ENCODE measurements at regions of chr9 and their contacts with region 1.

Region 1: GRCh38 chr9:134175808-134176598 is 11.6 kb upstream of the RNU6ATAC start:
- DNase-seq: no peak
- ATAC-seq: no peak
- H3K4me3 ChIP-seq: no peak overlapping the region
- H3K4me3 Mint-ChIP-seq: no peak overlapping the region
- H3K27ac ChIP-seq: no peak overlapping the region
- H3K27ac Mint-ChIP-seq: no peak overlapping the region
- H3K4me1 ChIP-seq: peaks cover 21 to 23% of the 10 kb centered on the region in 2 donors
- H3K4me1 Mint-ChIP-seq: peaks cover 20% of the 10 kb centered on the region
- H3K27me3 ChIP-seq: peaks cover 0 to 28% (median 8%) of the 10 kb centered on the region in 4 experiments
- H3K27me3 Mint-ChIP-seq: peaks cover 23% of the 10 kb centered on the region
- CTCF ChIP-seq: no peak

Region 2: DNA sequence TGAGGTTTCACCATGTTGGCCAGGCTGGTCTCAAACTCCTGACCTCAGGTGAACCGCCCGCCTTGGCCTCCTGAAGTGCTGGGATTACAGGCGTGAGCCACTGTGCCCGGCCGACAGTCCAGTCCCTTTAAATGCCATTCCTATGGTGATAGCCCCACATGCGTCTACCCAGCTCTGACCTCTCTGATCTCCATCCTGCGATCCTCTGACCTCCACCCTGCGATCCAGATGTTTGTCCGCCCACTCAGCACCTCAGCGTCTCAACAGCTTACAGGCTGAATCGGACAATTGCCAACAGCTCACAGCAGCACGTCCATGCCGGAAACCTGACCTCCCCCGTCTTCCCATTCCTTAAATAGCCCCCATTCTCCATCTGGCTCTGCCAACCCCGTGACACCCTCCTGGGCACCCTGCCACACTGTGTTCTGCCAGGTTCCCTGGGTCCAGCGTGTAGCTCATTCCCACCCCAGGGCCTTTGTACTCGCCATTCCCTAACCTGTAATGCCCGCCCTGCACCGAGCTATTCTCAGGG is 32.4 kb after region 1 on chr9:
- CTCF ChIA-PET with region 1: no interaction called
- POLR2A ChIA-PET with region 1: no interaction called
- intact Hi-C with region 1: no loop called
- DNase-seq: no peak
- ATAC-seq: no peak
- H3K4me3 ChIP-seq: no peak overlapping the region
- H3K4me3 Mint-ChIP-seq: no peak overlapping the region
- H3K27ac ChIP-seq: no peak overlapping the region
- H3K27ac Mint-ChIP-seq: no peak overlapping the region
- H3K4me1 ChIP-seq: no peaks in the 10 kb centered on the region
- H3K4me1 Mint-ChIP-seq: no peaks in the 10 kb centered on the region
- H3K27me3 ChIP-seq: no peaks in the 10 kb centered on the region
- H3K27me3 Mint-ChIP-seq: peaks cover 11% of the 10 kb centered on the region
- CTCF ChIP-seq: no peak

Region 3: DNA sequence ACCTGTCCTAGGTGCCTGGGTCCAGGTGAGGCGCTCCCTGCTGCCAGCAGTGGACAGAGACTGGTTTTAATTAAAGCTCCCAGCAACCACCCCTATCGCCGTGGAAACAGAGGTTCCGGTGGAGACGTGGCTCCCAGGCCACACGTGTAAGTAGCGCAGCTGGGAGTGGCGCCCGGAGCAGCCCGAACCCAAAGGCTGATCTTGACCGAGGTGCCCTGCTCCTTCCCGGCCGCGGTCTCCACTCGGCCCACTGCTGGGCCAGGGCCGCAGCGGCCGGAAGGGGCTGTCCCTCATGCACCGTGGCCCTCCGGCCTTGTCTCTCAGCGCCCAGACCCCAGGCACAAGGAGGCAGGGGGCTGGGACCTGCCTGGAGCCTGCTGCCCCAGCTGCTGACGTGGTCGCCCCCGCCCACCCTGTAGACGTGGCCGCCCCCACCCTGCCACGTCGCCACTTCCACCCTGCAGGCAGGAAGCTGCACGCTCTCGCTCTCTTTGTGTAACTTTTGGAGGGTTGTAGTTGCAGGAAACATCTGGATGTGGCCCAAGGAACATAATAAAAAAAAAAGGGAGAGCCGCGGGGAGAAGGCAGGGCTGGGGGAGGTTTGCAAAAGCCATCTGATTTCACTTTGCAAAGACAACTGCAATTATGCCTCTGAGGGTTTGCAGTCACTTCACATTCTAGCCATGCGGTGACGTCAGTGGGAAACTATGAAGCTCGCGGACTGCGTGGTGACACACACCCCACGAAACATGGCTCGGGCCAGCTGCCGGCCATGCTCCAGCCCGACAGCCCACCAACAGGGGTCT is 280.1 kb after region 1 on chr9:
- CTCF ChIA-PET with region 1: interaction called, 10 read pairs
- POLR2A ChIA-PET with region 1: no interaction called
- intact Hi-C with region 1: no loop called
- DNase-seq: peak; percentile 85
- ATAC-seq: peak; percentile 88
- H3K4me3 ChIP-seq: peak overlapping the region; percentile 51 to 67 (median 60)
- H3K4me3 Mint-ChIP-seq: peak overlapping the region; percentile 88
- H3K27ac ChIP-seq: peak overlapping the region; percentile 77 to 85
- H3K27ac Mint-ChIP-seq: peak overlapping the region; percentile 81
- H3K4me1 ChIP-seq: peaks cover 14 to 20% of the 10 kb centered on the region in 2 donors
- H3K4me1 Mint-ChIP-seq: peaks cover 11% of the 10 kb centered on the region
- H3K27me3 ChIP-seq: no peaks in the 10 kb centered on the region
- H3K27me3 Mint-ChIP-seq: no peaks in the 10 kb centered on the region
- CTCF ChIP-seq: no peak

Measured in B cell (primary cell).